Activated CD4-positive, alpha-beta T cell treated with anti-CD3 and anti-CD28 coated beads, Interleukin-2, amount 10 ng/mL, durations not matched to agents 24 days and 14 days (primary cell): ENCODE measurements at regions of chr12 and their contacts with region 1.

Region 1: DNA sequence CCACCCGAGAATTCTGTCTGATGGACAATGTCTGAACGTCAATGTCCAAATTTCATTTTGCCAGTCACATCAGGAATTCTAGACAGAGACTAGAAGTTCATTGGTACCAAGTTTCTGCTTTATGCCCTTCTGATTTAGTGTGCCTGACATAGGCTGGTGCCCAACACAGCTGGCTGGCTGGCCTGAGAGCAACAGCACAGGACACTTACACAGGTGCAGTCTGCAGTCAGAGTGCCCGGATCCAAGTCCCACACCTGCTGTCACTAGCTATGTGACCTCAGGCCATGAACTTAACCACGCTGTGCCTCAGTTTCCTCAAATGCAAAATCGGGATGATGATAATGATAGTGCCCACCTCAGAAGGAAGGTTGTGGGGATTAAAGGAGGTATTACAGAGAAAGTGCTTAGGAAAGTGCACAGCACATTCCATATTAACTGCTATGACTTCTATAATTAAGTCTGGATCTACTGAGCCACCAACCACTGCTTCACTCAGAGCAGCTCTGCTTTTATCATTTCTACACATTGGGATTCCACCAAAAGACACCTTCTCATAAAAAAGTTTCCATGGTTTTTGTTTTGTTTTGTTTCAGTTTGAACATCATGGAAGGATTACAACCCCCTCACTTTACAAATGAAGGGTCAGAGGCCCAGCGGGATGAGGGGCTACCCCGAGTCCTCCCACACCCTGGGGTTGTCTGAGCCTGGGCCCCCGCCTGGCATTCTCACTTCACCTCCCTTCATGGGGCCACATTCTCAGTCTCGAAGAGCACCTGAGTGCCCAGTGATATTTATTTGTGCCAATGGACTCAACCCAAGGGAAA is 168.8 kb upstream of the BCL2L14 start:
- DNase-seq: peak; percentile 72
- H3K4me3 Mint-ChIP-seq: peak overlapping the region; percentile 58
- H3K27ac Mint-ChIP-seq: peak overlapping the region; percentile 97
- H3K4me1 Mint-ChIP-seq: peaks cover 62% of the 10 kb centered on the region
- H3K27me3 Mint-ChIP-seq: no peaks in the 10 kb centered on the region

Region 2: GRCh38 chr12:11581179-11581755 is 320.6 kb before region 1 on chr12:
- intact Hi-C with region 1: loop called (anchors 5 kb)
- DNase-seq: peak; percentile 90
- H3K4me3 Mint-ChIP-seq: no peak overlapping the region
- H3K27ac Mint-ChIP-seq: no peak overlapping the region
- H3K4me1 Mint-ChIP-seq: peaks cover 26% of the 10 kb centered on the region
- H3K27me3 Mint-ChIP-seq: peaks cover 8% of the 10 kb centered on the region

Region 3: GRCh38 chr12:11771356-11771755 is 130.6 kb before region 1 on chr12:
- intact Hi-C with region 1: loop called (anchors 1 kb)
- DNase-seq: peak; percentile 65
- H3K4me3 Mint-ChIP-seq: peak overlapping the region; percentile 26
- H3K27ac Mint-ChIP-seq: peak overlapping the region; percentile 97
- H3K4me1 Mint-ChIP-seq: peaks cover 78% of the 10 kb centered on the region
- H3K27me3 Mint-ChIP-seq: no peaks in the 10 kb centered on the region

Region 4: DNA sequence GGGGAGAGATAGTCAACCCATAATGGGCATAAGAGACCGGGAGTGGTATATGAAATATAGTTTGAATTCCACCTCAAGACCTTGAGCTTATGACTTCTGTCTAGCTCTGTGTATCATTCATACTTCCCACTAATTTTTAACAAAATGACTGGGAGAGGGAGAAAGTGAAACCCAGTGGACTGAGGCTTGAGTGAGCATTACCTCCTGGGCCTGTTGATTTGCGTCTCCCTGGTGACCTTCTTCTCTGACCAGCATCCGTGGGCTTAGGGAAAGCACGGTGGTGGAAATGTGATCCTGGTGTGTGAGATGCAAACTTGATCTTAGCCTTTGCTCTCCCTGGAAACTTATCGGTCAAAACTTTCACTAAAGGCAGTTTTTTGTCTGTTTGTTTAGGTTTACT is 39.1 kb before region 1 on chr12:
- intact Hi-C with region 1: loop called (anchors 2 kb)
- DNase-seq: no peak
- H3K4me3 Mint-ChIP-seq: no peak overlapping the region
- H3K27ac Mint-ChIP-seq: peak overlapping the region; percentile 60
- H3K4me1 Mint-ChIP-seq: peaks cover 57% of the 10 kb centered on the region
- H3K27me3 Mint-ChIP-seq: no peaks in the 10 kb centered on the region

Region 5: DNA sequence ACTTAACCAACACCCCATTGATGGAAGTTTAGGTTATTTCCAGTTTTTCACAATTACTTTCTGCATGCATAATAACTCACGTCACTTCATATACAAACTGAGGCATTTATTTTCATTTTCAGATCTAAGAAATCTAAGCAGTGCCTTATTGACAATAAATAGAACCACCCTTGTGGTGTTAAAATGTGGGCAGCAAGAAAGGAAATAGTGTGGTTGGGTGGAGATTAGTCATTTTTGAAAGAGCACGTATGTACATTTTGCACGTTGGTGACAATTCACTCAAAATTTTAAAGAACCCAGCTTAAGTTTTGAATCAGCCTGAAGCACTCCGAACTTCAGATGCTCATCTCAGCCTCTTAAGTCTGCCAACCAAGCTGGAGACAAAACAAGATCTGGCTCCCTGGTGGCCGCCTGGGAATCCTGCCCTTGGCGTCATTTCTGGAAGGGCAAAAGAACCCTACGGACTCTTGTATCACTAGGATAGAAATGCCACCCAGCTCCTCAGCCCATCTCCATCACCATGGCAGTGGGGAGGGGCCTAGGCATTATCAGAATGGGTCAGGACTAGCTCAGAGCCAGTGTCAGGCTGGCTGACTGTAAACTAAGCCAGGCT is 79.3 kb after region 1 on chr12:
- intact Hi-C with region 1: loop called (anchors 1 kb)
- DNase-seq: peak; percentile 92
- H3K4me3 Mint-ChIP-seq: peak overlapping the region; percentile 68
- H3K27ac Mint-ChIP-seq: peak overlapping the region; percentile 99
- H3K4me1 Mint-ChIP-seq: peaks cover 62% of the 10 kb centered on the region
- H3K27me3 Mint-ChIP-seq: no peaks in the 10 kb centered on the region

Region 6: GRCh38 chr12:12194206-12194605 is 292.3 kb after region 1 on chr12:
- intact Hi-C with region 1: no loop called
- DNase-seq: no peak
- H3K4me3 Mint-ChIP-seq: no peak overlapping the region
- H3K27ac Mint-ChIP-seq: no peak overlapping the region
- H3K4me1 Mint-ChIP-seq: no peaks in the 10 kb centered on the region
- H3K27me3 Mint-ChIP-seq: peaks cover 45% of the 10 kb centered on the region